Left cardiac atrium (tissue), 4 donors: ENCODE measurements at regions of chr7 and their contacts with region 1.

Region 1: GRCh38 chr7:93622036-93623033 is 47.8 kb upstream of the CALCR start:
- DNase-seq: no peak
- ATAC-seq: peak in 1 of 2 donors; percentile 47

Region 2: GRCh38 chr7:93704217-93704616 is 81.9 kb after region 1 on chr7:
- intact Hi-C with region 1: no loop called
- DNase-seq: no peak
- ATAC-seq: no peak

Region 3: GRCh38 chr7:94087664-94088352 is 465.5 kb after region 1 on chr7:
- intact Hi-C with region 1: loop called in 1 of 2 experiments (anchors 10 kb)
- DNase-seq: peak; percentile 20
- ATAC-seq: peak; percentile 68 to 77

Region 4: DNA sequence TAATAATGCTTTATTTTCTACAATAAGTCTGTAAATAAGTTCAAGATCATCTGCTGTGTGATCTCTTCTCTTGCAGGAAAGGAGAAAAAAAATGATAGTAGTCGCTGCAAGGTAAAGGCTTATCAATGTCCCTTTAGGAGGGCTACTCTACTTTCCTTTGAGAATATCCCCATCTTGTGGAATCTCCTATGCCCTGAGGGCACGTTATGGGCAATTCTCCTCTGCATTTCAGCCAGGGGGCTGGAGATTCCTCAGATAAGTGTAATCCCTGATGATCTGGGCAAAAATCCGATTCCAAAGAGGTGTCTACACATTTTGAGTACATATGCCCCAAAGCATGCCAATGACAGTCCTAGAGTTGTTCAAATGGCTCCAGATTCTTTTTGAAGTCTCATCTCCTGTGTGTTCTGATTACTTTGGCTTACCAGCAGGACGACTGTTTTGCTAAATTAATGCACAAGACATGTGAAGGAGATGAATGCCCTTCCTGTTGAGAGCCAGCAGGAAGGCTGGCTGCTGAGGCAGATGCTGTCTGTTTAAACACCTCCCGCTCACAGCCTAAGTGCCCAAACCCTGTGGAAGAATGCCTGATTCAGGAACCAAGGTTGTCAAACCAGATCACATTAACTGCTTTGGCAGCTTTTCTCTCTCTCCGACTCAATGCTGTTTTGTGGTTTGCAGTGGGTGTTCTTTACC is 601.2 kb after region 1 on chr7:
- intact Hi-C with region 1: loop called in 1 of 2 experiments (anchors 5 kb)
- DNase-seq: no peak
- ATAC-seq: peak in 1 of 2 donors; percentile 29